PC-3 (cell line): ENCODE measurements at regions of chr18 and their contacts with region 1.

Region 1: DNA sequence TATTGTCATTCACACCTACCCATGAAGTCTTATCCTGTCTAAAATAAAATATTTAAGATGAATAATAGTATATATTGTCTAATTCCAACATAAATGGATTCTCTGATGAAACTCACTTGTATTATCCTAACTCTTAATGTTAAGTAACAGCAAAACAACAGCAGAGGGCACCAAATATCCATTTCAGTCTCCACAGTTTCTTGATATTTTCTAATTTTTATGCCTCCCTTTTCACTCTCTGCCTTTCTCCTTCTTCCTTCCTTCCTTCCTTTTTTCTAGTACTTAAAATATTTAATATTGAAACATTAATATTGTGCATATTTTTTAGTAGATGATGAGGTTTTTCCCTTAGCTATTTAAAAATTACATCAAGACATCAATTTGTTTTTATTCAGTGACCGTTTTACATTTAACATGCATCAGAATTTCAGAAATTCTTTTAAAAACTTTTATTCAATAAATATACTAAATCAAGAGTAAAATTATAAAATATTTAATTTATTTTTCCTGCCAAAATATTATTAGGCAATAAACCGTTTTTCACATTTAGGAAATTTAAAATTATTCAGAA is 97.6 kb downstream of the WDR7 start:
- DNase-seq: peak; percentile 63
- ATAC-seq: no peak
- H3K4me3 ChIP-seq: no peak overlapping the region
- H3K27ac ChIP-seq: no peak overlapping the region
- H3K4me1 ChIP-seq: no peaks in the 10 kb centered on the region
- H3K27me3 ChIP-seq: no peaks in the 10 kb centered on the region
- CTCF ChIP-seq: peak; percentile 64

Region 2: DNA sequence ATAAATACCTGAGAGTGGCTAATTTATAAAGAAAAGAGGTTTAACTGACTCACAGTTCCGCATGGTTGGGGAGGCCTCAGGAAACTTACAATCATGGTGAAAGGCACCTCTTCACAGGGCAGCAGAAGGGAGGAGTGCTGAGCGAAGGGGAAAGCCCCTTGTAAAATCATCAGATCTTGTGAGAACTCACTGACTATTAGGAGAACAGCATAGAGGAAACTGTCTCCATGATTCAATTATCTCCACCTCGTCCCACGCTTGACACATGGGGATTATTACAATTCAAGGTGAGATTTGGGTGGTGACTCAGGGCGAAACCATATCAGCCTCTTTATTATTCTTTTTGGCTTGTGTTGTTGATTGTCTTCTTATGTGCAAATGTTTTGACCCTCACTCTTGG is 21.4 kb before region 1 on chr18:
- CTCF ChIA-PET with region 1: no interaction called
- POLR2A ChIA-PET with region 1: no interaction called
- intact Hi-C with region 1: no loop called
- DNase-seq: no peak
- ATAC-seq: no peak
- H3K4me3 ChIP-seq: no peak overlapping the region
- H3K27ac ChIP-seq: no peak overlapping the region
- H3K4me1 ChIP-seq: peaks cover 11% of the 10 kb centered on the region; the same call in 1 of the 2 replicates
- H3K27me3 ChIP-seq: no peaks in the 10 kb centered on the region
- CTCF ChIP-seq: no peak

Region 3: GRCh38 chr18:57434536-57435494 is 686.0 kb after region 1 on chr18 and contains the start of gene ONECUT2:
- CTCF ChIA-PET with region 1: no interaction called
- POLR2A ChIA-PET with region 1: no interaction called
- intact Hi-C with region 1: loop called (anchors 5 kb)
- DNase-seq: peak; percentile 95
- ATAC-seq: peak; percentile 95
- H3K4me3 ChIP-seq: peak within 1 kb of the TSS; percentile 80
- H3K27ac ChIP-seq: no peak within 1 kb of the TSS
- H3K4me1 ChIP-seq: peaks cover 4% of the 10 kb centered on the region; the same call in 1 of the 2 replicates
- H3K27me3 ChIP-seq: peaks cover 57% of the 10 kb centered on the region
- CTCF ChIP-seq: no peak
- total RNA-seq, gene ONECUT2: 1.0 and 1.1 TPM in 2 replicates

Region 4: DNA sequence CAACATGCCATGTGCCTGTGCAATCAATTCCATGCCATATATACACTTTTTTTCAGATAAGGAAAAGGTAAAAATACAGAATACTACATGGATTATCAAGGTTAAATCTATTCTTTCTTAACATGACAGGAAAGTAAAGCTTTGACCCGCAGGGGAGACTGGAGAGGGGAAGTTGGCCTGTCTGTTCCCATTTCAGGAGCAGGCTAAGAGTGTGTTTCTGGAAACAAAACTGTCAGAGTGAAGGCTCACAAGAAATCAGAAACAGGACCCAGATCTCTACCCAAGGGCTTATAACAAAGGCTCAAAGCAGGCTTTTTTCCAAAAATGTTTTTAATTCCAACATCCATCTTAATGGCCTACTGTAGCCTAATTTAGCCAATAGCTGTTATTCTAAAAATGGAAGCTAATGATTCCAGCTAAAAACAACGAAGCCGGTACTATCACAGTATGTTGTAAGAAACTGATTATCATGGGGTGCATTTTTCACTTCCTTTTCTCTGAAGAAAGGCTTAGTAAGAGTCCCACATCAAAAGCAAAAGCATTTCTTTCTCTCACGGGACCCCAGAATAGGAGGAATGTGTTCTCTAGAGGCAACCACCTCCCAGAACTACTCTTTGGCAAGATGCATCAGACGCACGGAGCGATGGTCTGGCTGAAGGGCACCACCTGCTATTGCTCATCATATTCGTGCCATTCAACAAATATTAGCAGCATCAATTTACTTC is 796.3 kb after region 1 on chr18:
- CTCF ChIA-PET with region 1: no interaction called
- POLR2A ChIA-PET with region 1: no interaction called
- intact Hi-C with region 1: no loop called
- DNase-seq: no peak
- ATAC-seq: no peak
- H3K4me3 ChIP-seq: no peak overlapping the region
- H3K27ac ChIP-seq: no peak overlapping the region
- H3K4me1 ChIP-seq: no peaks in the 10 kb centered on the region
- H3K27me3 ChIP-seq: no peaks in the 10 kb centered on the region
- CTCF ChIP-seq: no peak

Region 5: DNA sequence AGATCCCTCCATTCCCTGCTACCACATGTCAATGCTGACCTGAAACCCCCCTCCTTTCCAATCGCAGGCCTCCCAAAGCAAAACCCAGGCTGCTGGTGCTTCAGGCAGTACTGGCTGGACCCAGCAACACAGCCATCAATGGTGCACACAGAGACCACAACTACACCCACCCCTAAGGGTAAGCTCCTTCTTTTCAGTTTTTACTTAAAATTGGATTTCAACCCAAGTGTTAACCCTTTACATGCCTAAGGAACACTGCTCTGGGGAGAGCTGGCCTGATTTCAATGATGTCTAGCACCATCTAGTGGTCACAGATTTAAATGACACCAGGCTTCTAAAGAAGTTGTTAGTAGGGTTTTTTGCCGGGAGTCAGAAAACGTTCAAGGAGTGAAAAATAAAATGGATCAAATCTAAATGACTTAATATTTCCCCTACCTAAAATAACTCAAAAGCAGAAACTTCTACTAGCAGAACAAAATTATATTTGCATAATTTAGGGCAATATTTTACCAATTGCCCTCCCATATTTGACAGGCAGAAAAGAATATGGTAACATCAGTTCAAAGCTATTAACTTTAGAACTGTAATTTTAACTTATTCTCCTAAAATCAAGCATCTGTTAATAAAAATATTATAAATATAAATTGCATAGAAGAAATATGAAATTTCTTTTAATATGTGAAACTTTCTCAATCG is 813.1 kb after region 1 on chr18:
- CTCF ChIA-PET with region 1: no interaction called
- POLR2A ChIA-PET with region 1: no interaction called
- intact Hi-C with region 1: loop called (anchors 2 kb)
- DNase-seq: peak; percentile 57
- ATAC-seq: 0 out of 2 replicates have a peak, but pooled peaks have one; percentile 42
- H3K4me3 ChIP-seq: no peak overlapping the region
- H3K27ac ChIP-seq: no peak overlapping the region
- H3K4me1 ChIP-seq: no peaks in the 10 kb centered on the region
- H3K27me3 ChIP-seq: no peaks in the 10 kb centered on the region
- CTCF ChIP-seq: peak; percentile 93